ENCODE measurements at regions of chr1 and their contacts with region 1.

Region 1: DNA sequence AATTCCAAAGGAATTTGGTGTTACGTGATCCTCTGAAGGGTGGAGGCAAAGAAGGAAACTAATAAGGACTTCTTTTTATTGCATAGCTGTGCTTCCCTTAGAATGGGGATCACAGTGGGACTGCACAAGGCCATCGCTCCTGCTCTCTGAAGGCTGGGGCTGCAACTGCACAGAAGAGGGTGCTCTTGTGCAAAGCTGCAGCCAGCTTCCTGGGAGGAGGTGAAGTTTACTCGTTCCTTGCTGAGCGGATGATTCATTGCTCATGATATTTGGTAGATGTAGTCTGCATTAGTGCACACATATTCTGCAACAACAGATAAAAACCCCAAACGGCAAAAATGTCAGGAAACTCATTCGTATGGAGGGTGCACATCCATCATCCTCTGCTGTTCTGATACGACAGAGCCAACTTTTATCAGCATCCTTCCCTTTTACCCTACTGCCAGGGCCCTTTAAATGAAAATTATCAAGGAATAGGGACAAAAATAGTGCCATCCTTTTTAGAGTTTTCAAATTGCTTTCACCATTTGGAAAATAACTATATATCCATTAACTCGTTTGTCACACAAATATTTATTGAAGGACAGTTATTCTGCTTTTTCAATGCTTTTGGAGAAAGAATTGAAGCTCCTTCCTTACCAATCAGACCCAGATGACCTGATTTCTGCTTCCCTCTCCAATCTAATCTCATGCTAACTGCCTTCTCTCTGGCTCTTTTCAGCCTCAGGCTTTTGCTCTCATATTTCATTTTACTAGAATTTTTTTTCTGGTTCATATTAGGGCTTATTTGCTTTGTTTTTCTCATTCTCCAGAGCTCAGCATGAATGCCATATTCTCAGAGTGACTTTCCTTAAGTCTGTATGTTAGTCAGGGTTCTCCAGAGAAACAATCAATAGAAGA is 263.6 kb downstream of the DUSP10 start:
- DNase-seq: no peak
- ATAC-seq: peak; percentile 85

Region 2: DNA sequence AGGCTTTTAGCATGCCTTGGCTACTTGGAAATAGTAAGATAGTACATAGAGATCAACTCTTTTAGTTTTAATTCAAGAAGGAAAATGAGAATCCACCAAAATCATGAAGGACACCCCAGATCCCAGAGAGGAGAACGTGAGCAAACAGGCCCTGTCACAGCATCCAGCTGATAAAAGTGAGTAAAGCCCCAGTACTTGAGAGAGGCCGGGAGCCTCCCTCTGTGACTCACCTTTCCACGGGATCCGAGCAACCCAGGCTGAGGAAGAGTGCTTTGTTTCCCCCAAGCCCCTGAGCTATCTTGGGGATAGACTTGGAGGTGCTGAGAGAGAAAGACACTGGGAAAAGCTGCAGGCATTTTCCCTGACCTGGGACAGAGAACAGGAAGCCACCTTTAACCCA is 25.0 kb after region 1 on chr1:
- intact Hi-C with region 1: no loop called
- DNase-seq: no peak
- ATAC-seq: no peak

Region 3: GRCh38 chr1:222171005-222171404 is 692.7 kb after region 1 on chr1:
- intact Hi-C with region 1: loop called (anchors 5 kb)
- DNase-seq: no peak
- ATAC-seq: no peak

Region 4: GRCh38 chr1:222455188-222455879 is 977.0 kb after region 1 on chr1:
- intact Hi-C with region 1: loop called (anchors 2 kb)
- DNase-seq: peak; percentile 87
- ATAC-seq: peak; percentile 95